ENCODE measurements at regions of chr17 and their contacts with region 1.

Region 1: GRCh38 chr17:38421871-38422827 is 6.1 kb upstream of the ARHGAP23 start:
- DNase-seq: no peak
- ATAC-seq: no peak
- H3K4me3 ChIP-seq: no peak overlapping the region
- H3K4me3 Mint-ChIP-seq: no peak overlapping the region
- H3K27ac ChIP-seq: no peak overlapping the region
- H3K27ac Mint-ChIP-seq: no peak overlapping the region
- H3K4me1 ChIP-seq: peaks cover 5% of the 10 kb centered on the region
- H3K4me1 Mint-ChIP-seq: peaks cover 7 to 22% of the 10 kb centered on the region in 2 donors
- H3K27me3 ChIP-seq: peaks cover 22% of the 10 kb centered on the region
- H3K27me3 Mint-ChIP-seq: peaks cover 39 to 44% of the 10 kb centered on the region in 2 donors
- CTCF ChIP-seq: no peak

Region 2: DNA sequence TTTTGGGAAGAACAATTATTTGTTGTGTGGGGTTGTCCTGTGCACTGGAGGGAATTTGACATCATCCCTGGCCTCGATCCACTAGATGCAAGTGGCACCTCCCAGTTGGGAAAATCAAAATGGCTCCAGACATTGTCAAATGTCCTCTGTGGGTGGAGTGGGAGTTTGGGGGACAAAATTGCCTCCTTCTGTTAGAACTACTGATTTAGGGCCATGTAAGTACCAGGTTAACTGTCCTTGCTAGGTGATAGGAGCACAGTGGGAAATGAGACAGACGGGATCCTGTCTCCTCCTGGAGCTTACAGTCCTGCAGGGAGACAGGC is 63.0 kb after region 1 on chr17:
- intact Hi-C with region 1: loop called (anchors 2 kb)
- DNase-seq: no peak
- ATAC-seq: no peak
- H3K4me3 ChIP-seq: no peak overlapping the region
- H3K4me3 Mint-ChIP-seq: peak overlapping the region; percentile 26
- H3K27ac ChIP-seq: no peak overlapping the region
- H3K27ac Mint-ChIP-seq: peak overlapping the region in 1 of 2 donors; percentile 74
- H3K4me1 ChIP-seq: peaks cover 18% of the 10 kb centered on the region
- H3K4me1 Mint-ChIP-seq: peaks cover 12 to 16% of the 10 kb centered on the region in 2 donors
- H3K27me3 ChIP-seq: no peaks in the 10 kb centered on the region
- H3K27me3 Mint-ChIP-seq: no peaks in the 10 kb centered on the region
- CTCF ChIP-seq: peak; percentile 6